WTC11 (cell line): ENCODE measurements at regions of chr12 and their contacts with region 1.

Region 1: DNA sequence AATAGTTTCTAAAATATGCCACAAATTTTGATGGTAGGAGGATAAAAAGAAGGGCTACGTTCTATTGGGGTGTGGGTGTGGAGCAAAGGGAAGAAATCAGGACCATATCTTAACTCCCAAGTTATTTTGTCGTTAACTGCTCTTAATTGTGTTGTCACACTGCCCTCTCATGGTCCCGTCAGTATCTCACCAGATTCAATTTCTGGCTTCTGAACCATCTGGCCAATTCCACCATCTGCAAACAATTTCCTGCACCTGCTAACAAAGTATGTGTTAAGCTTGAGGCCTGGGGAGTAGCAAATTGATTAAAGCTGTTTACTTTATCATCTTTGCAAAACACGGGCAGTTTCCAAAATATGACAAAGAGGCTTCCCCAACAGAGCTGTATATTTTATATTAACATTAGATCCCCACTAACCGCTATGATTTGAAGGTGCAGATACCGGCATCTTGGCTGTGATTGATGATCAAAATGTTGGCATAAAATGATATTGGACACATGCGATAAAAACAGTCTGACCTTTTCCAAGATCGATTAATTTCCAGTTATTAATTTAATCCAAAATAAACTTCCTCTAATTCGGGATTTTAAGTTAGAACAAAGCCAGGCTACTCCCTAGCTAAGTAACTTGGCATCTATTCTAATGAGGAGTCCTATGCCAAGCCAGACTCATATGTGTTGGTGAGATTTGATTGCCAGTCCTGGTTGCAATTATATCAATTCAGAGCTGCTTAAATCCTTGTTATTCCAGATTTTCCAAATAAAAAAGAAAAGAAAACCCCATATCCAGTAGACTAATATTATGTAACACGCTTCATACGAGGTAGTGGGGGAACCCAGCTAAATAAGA is 6.9 kb upstream of the DNM1L start:
- DNase-seq: no peak
- ATAC-seq: peak; percentile 92
- H3K4me3 Mint-ChIP-seq: no peak overlapping the region
- H3K27ac Mint-ChIP-seq: no peak overlapping the region
- H3K4me1 Mint-ChIP-seq: peaks cover 2% of the 10 kb centered on the region; the same call in 1 of the 2 replicates
- H3K27me3 Mint-ChIP-seq: no peaks in the 10 kb centered on the region
- CTCF ChIP-seq: peak; percentile 26; the same call in 1 of the 2 replicates

Region 2: GRCh38 chr12:32344047-32344446 is 328.1 kb before region 1 on chr12:
- CTCF ChIA-PET with region 1: interaction called, 10 read pairs
- POLR2A ChIA-PET with region 1: no interaction called
- DNase-seq: peak; percentile 29
- ATAC-seq: peak; percentile 95
- H3K4me3 Mint-ChIP-seq: no peak overlapping the region
- H3K27ac Mint-ChIP-seq: peak overlapping the region; percentile 54
- H3K4me1 Mint-ChIP-seq: peaks cover 2% of the 10 kb centered on the region
- H3K27me3 Mint-ChIP-seq: no peaks in the 10 kb centered on the region
- CTCF ChIP-seq: no peak

Region 3: GRCh38 chr12:32455607-32456071 is 216.5 kb before region 1 on chr12:
- CTCF ChIA-PET with region 1: interaction called, 10 read pairs
- POLR2A ChIA-PET with region 1: no interaction called
- DNase-seq: no peak
- ATAC-seq: no peak
- H3K4me3 Mint-ChIP-seq: peak overlapping the region; percentile 65
- H3K27ac Mint-ChIP-seq: peak overlapping the region; percentile 97
- H3K4me1 Mint-ChIP-seq: peaks cover 70% of the 10 kb centered on the region
- H3K27me3 Mint-ChIP-seq: no peaks in the 10 kb centered on the region
- CTCF ChIP-seq: peak; percentile 24; the same call in 1 of the 2 replicates

Region 4: GRCh38 chr12:32906407-32907165 is 234.4 kb after region 1 on chr12:
- CTCF ChIA-PET with region 1: no interaction called
- POLR2A ChIA-PET with region 1: no interaction called
- DNase-seq: no peak
- ATAC-seq: no peak
- H3K4me3 Mint-ChIP-seq: no peak overlapping the region
- H3K27ac Mint-ChIP-seq: no peak overlapping the region
- H3K4me1 Mint-ChIP-seq: 0 out of 2 replicates have a peak, but pooled peaks cover 2% of the 10 kb centered on the region
- H3K27me3 Mint-ChIP-seq: no peaks in the 10 kb centered on the region
- CTCF ChIP-seq: no peak